Caco-2 (cell line): ENCODE measurements at regions of chr2 and their contacts with region 1.

Region 1: GRCh38 chr2:30447149-30448045 is at the start of gene LCLAT1:
- DNase-seq: peak; percentile 80 to 88
- H3K4me3 ChIP-seq: peak within 1 kb of the TSS; percentile 90
- H3K4me3 Mint-ChIP-seq: peak within 1 kb of the TSS; percentile 97
- H3K27ac Mint-ChIP-seq: peak within 1 kb of the TSS; percentile 100
- H3K4me1 ChIP-seq: peaks cover 12% of the 10 kb centered on the region; the same call in 1 of the 2 replicates
- H3K4me1 Mint-ChIP-seq: peaks cover 6% of the 10 kb centered on the region
- H3K27me3 ChIP-seq: no peaks in the 10 kb centered on the region
- H3K27me3 Mint-ChIP-seq: no peaks in the 10 kb centered on the region
- CTCF ChIP-seq: peak in 1 of 2 experiments; percentile 2
- total RNA-seq, gene LCLAT1: 52.2 and 55.8 TPM in 2 replicates

Region 2: DNA sequence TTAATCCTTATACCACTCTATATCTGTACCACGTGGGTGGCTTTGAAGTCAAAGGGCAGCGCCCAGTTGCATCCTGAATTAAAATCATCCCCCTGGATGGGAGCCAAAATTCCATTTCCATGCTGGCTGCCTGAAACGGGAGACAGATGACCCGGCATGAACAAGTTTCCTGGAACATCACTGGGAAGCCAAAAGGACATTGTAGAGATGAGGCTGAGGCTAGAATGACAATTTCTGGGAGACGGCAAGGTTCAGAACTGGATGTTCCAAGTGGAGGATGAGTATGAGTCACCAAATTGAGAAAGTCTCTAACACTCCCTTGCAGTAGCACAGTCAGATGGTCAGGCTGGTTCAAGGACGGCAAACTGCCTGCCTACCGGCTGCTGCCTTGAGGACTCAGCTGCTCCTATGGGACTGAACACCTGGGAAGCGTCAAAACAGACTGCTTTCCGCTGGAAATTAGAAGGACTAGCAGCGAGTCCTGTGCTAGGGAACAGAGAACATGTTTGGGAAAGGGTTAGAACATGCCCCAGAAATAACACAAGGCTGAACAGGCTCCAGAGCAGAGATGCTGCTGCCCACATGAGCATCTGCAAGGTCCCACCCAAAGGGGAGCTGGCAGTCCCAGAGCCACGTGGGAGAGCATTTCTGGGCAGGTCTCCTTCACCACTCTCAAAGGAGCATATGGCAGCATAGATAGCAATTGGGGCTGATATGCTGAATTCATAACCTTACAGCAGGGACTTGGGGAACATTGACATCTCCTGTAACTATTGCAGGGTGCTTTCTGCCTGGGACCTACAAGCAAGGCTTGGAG is 268.6 kb before region 1 on chr2:
- CTCF ChIA-PET with region 1: no interaction called
- POLR2A ChIA-PET with region 1: no interaction called
- intact Hi-C with region 1: no loop called
- DNase-seq: no peak
- H3K4me3 ChIP-seq: no peak overlapping the region
- H3K4me3 Mint-ChIP-seq: no peak overlapping the region
- H3K27ac Mint-ChIP-seq: no peak overlapping the region
- H3K4me1 ChIP-seq: no peaks in the 10 kb centered on the region
- H3K4me1 Mint-ChIP-seq: no peaks in the 10 kb centered on the region
- H3K27me3 ChIP-seq: no peaks in the 10 kb centered on the region
- H3K27me3 Mint-ChIP-seq: no peaks in the 10 kb centered on the region
- CTCF ChIP-seq: no peak

Region 3: GRCh38 chr2:30231212-30231995 is 216.0 kb before region 1 on chr2 and contains the start of gene LBH:
- CTCF ChIA-PET with region 1: no interaction called
- POLR2A ChIA-PET with region 1: interaction called, 5 read pairs
- intact Hi-C with region 1: loop called (anchors 5 kb)
- DNase-seq: peak; percentile 87 to 91
- H3K4me3 ChIP-seq: peak within 1 kb of the TSS; percentile 60
- H3K4me3 Mint-ChIP-seq: peak within 1 kb of the TSS; percentile 94
- H3K27ac Mint-ChIP-seq: peak within 1 kb of the TSS; percentile 67
- H3K4me1 ChIP-seq: peaks cover 28% of the 10 kb centered on the region
- H3K4me1 Mint-ChIP-seq: peaks cover 30% of the 10 kb centered on the region
- H3K27me3 ChIP-seq: no peaks in the 10 kb centered on the region
- H3K27me3 Mint-ChIP-seq: no peaks in the 10 kb centered on the region
- CTCF ChIP-seq: peak in 1 of 2 experiments; percentile 10
- total RNA-seq, gene LBH: 126 and 159 TPM in 2 replicates

Region 4: GRCh38 chr2:30336978-30337841 is 110.2 kb before region 1 on chr2:
- CTCF ChIA-PET with region 1: no interaction called
- POLR2A ChIA-PET with region 1: no interaction called
- intact Hi-C with region 1: no loop called
- DNase-seq: no peak
- H3K4me3 ChIP-seq: no peak overlapping the region
- H3K4me3 Mint-ChIP-seq: no peak overlapping the region
- H3K27ac Mint-ChIP-seq: peak overlapping the region; percentile 53
- H3K4me1 ChIP-seq: peaks cover 18% of the 10 kb centered on the region; the same call in 1 of the 2 replicates
- H3K4me1 Mint-ChIP-seq: peaks cover 12% of the 10 kb centered on the region
- H3K27me3 ChIP-seq: no peaks in the 10 kb centered on the region
- H3K27me3 Mint-ChIP-seq: no peaks in the 10 kb centered on the region
- CTCF ChIP-seq: no peak

Region 5: GRCh38 chr2:30404319-30404953 is 43.0 kb before region 1 on chr2:
- CTCF ChIA-PET with region 1: no interaction called
- POLR2A ChIA-PET with region 1: no interaction called
- intact Hi-C with region 1: loop called (anchors 2 kb)
- DNase-seq: no peak
- H3K4me3 ChIP-seq: no peak overlapping the region
- H3K4me3 Mint-ChIP-seq: no peak overlapping the region
- H3K27ac Mint-ChIP-seq: no peak overlapping the region
- H3K4me1 ChIP-seq: peaks cover 16% of the 10 kb centered on the region
- H3K4me1 Mint-ChIP-seq: peaks cover 8% of the 10 kb centered on the region
- H3K27me3 ChIP-seq: no peaks in the 10 kb centered on the region
- H3K27me3 Mint-ChIP-seq: no peaks in the 10 kb centered on the region
- CTCF ChIP-seq: no peak

Region 6: DNA sequence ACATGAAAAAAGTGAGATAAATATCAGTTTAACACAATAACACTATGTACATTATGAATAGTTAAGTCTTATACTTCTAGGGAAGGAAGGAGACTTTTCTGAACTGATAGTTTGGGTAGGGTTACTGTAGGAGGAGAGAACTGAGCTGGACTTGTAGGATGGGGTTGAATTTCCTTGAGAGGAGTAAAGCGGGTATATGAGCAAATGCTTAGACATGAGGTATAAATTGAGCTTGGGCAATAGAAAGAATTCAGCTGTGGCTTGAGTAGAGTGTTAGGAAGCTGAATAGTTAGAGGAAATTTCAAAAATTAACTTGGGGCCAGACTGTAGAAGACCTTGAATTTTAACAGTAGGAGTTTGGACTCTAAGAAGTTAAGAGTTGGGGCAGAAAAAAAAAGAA is 44.8 kb after region 1 on chr2:
- CTCF ChIA-PET with region 1: no interaction called
- POLR2A ChIA-PET with region 1: interaction called, 3 read pairs
- intact Hi-C with region 1: loop called (anchors 1 kb)
- DNase-seq: no peak
- H3K4me3 ChIP-seq: no peak overlapping the region
- H3K4me3 Mint-ChIP-seq: no peak overlapping the region
- H3K27ac Mint-ChIP-seq: no peak overlapping the region
- H3K4me1 ChIP-seq: no peaks in the 10 kb centered on the region
- H3K4me1 Mint-ChIP-seq: no peaks in the 10 kb centered on the region
- H3K27me3 ChIP-seq: no peaks in the 10 kb centered on the region
- H3K27me3 Mint-ChIP-seq: no peaks in the 10 kb centered on the region
- CTCF ChIP-seq: no peak